Cardiac septum (tissue), 1 donor: ENCODE measurements at regions of chr9 and their contacts with region 1.

Region 1: DNA sequence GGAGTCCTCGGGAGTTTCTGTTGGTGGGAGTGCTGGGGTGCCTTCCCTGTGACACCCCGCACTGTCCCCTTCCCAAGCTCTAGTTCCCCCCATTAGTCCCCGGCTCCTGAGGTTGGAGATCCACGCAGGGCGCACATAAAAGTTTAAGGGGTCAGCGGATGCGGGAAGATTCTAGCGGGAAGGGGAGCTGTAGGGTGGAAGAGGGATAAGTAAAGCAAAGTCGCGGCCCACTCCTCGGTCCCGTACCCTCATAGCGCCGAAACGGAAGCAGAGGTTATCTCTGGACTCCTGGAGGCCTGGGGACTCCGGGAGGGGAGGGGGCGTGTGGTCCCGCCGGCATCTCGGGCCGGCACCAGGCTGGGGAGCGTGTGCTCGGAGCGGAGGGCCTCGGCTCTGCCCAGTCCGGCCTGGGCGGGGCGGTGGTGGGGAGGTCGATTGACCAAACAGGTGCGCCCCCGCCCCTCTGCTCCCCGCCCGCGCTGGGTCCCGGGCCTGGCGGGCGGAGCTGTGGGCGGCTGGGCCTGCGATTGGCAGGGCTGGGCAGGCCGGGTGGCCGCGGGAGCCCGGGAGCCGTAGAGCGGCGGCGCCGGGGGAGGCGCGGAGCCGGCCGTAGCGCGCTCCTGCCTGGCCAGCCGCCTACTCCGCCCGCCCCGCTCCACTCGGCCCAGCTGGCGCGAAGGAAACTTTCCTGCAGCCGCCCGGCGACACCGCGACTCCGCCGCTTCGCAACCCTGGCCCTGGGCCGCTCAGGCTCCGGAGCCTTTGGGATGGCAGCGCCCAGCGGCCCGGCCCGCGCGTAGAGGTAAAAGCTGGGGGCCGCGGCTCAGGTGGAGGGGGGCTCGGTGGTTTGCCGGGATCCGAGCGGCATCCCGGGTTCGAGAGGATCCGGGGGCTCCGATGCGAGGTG is 52.2 kb upstream of the DAB2IP start:
- DNase-seq: peak; percentile 88

Region 2: DNA sequence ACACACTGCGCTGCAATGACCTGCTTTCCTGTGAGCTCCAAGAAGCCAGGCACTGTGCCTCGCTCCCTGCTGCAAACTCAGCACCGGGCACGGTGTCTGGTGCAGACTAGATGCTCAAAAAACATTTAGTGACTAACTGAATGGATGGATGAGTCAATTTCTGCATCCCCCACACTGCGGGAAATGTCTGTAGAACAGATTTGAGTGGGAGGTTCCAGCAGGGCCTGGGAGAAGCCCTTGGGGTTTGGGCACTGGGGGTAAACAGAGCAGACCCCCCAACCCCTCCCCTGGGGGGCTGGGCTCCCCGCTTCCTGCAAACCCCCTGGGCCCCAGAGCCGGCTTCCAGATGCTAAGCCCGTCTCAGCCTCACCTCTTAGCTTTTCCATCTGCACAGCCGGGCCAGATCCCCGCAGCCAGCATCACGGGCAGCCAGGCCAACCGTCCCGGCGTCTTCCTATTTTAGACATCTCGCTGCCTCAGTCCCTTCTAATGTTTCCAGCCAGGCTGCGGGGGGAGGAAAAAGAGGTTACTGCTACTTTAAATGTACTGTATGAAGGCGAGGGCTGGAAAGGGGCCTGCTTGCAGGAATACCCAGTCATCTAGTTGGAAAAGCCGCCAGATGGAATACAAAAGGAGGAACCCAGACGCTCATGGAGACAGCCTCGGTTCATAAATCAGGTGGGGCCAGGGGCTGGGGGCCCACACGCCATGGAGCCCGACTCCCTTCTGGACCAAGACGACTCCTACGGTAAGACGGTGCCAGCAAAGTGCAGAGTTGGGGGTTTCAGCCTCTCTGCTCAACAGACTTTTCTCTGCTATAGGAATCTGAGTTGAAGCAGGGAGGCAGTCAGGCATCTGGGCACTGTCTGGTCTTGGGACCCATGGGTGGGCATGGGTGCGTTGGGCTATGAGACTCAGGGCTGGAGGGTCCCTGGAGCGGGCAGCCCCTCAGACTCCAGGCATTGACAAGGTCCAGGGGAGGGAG is 32.4 kb before region 1 on chr9:
- intact Hi-C with region 1: loop called (anchors 2 kb)
- DNase-seq: peak; percentile 86

Region 3: GRCh38 chr9:121609845-121610570 is 10.8 kb after region 1 on chr9:
- intact Hi-C with region 1: loop called (anchors 1 kb)
- DNase-seq: no peak

Region 4: GRCh38 chr9:121658166-121658565 is 58.9 kb after region 1 on chr9:
- intact Hi-C with region 1: no loop called
- DNase-seq: no peak

Region 5: DNA sequence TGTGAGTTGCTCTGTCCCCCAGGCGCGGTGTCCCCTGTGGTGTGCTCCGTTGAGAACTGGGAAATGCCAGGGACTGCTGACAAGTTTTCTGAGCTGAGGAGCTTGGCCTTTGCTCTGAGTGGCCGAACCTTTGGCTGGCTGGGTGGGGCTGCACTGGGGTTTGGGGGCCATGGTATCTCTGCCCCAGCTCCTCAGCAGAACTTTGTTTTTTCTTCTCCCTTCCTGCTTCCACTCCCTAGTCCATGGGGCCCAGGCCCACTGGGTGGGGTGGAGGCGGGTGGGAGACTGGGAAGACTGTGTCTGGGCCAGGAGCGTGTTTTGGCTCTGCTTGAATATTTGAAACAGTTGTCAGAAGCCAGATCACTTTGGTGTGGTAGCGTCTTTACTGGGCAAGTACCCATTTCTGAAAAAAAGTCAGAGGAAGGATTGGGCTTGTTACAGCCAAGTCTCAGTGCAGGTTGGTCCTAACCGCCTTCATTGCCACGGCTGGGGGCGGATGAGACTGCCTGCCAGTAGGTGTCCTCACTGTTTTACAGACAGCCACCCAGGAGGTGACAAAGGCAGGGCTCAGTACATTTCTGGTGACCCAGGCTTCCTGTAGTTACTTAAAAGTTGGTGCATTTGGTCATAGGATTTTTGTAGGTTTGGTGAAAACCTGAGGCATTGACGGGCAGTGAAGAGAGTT is 144.9 kb after region 1 on chr9:
- intact Hi-C with region 1: loop called (anchors 5 kb)
- DNase-seq: no peak